Motor neuron (in vitro differentiated cells): ENCODE measurements at regions of chr19 and their contacts with region 1.

Region 1: GRCh38 chr19:46076951-46077816 is 36.4 kb upstream of the IGFL4 start:
- ATAC-seq: peak; percentile 79 to 100 (median 100)
- H3K4me3 ChIP-seq: peak overlapping the region; percentile 41 to 58 (median 49)
- H3K27ac ChIP-seq: no peak overlapping the region
- H3K4me1 ChIP-seq: peaks cover 0 to 2% of the 10 kb centered on the region in 2 donors

Region 2: DNA sequence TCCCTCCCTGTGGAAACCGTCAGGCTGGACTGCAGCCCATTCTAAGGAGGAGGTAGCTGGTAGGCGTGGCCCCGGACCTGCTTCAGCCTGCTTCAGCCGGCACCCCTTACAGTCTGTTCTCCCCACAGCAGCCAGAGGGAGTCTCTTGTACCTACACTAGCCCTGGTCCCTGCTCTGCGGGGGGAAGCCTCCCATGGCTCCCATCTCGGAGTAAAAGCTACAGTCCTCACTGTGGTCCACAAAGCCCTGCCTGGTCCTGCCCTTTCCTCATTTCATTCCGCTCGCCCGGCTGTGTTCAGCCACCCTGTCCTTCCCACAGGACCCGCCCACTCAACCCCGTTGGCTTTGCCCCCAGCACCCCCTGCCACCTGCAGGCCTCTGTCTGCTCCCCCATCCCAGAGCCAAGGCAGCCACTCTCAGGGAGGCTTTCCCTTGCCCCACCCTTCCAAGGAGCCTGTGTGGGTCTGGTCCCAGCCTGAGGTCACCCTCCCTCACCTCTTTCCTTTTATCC is 55.6 kb before region 1 on chr19:
- in situ Hi-C with region 1: loop called in 2 of 9 experiments (anchors 10 kb)
- ATAC-seq: peak in 5 of 8 experiments; percentile 16 to 62 (median 40)
- H3K4me3 ChIP-seq: no peak overlapping the region
- H3K27ac ChIP-seq: peak overlapping the region in 1 of 2 donors; percentile 2
- H3K4me1 ChIP-seq: peaks cover 9 to 12% of the 10 kb centered on the region in 2 donors

Region 3: DNA sequence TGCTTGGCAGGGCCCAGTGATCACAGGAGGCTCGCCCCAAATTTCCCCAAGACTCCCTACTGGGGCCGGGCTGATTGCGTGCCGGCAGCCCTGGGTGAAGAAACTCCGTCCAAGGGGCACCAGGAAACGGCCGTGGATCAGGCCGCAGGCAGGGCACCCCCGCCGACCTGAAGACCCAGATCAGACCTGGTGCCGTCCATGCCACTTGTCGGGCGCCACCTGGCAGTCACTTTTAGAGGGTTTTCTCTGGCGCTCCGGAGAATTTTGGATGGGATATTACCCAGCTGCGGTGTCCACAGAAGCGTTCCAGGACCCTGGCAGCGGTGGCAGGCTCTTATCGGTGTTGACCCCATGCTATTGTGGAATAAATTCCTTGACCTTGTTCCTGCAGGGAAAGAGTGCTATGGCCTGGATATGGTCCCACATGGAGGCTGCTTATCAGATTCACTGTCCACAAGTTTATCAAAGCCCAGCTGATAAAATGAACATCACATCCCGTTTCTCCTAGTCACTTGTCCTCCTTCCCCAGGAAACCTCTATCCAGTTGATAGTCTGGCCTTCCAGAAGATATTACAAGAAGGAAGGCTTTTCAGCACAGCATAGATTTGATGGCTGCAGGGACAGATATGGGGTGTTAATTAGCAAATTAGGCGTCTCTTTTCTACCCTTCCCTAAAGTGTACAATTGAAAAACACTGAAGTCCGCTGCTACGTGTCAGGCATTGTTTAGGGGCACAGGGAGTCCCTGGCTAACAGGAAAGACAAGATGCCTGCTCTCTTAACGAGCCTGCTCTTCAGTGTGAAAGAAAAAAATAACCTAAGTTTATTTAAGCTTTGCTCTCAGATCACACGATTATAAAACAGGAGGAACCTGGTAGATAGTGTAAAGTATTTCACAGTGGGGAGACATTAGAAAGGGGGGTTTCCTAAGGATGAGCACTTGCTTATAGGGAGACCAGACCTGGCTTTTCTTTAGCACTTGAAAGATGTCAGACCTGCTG is 109.2 kb after region 1 on chr19:
- in situ Hi-C with region 1: loop called in 4 of 9 experiments (anchors 5 to 25 kb)
- ATAC-seq: no peak
- H3K4me3 ChIP-seq: no peak overlapping the region
- H3K27ac ChIP-seq: no peak overlapping the region
- H3K4me1 ChIP-seq: peaks cover 0 to 3% of the 10 kb centered on the region in 2 donors

Region 4: DNA sequence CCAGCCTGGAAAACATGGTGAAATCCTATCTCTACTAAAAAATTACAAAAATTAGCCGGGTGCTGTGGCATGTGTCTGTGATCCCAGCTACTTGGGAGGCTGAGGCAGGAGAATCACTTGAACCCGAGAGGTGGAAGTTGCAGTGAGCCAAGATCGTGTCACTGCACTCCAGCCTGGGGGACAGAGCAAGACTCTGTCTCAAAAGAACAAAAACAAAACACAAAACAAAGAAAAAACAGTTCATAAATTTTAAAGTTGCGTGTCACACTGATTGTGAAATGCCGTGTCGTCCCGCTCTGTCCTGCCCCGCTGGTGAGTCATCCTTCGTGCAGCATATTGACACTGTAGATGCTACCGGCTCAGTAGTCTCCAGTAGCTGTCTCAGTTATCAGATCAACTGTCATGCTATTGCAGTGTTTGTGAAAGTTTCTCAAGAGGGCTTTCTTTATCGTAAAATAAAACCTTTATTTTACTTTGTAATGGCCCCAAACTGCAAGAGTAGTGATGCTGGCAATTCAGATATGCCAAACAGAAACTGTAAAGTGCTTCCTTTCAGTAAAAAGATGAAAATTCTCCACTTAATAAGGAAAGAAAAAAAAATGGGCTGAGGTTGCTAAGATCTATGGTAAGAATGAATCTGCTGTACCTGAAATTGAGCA is 115.9 kb after region 1 on chr19:
- in situ Hi-C with region 1: loop called in 4 of 9 experiments (anchors 5 to 25 kb)
- ATAC-seq: peak; percentile 60 to 99 (median 97)
- H3K4me3 ChIP-seq: no peak overlapping the region
- H3K27ac ChIP-seq: no peak overlapping the region
- H3K4me1 ChIP-seq: peaks cover 0 to 8% of the 10 kb centered on the region in 2 donors

Region 5: GRCh38 chr19:46265217-46265828 is 188.1 kb after region 1 on chr19:
- in situ Hi-C with region 1: loop called in 7 of 9 experiments (anchors 5 to 25 kb)
- ATAC-seq: peak; percentile 92 to 98 (median 96)
- H3K4me3 ChIP-seq: no peak overlapping the region
- H3K27ac ChIP-seq: no peak overlapping the region
- H3K4me1 ChIP-seq: no peaks in the 10 kb centered on the region

Region 6: DNA sequence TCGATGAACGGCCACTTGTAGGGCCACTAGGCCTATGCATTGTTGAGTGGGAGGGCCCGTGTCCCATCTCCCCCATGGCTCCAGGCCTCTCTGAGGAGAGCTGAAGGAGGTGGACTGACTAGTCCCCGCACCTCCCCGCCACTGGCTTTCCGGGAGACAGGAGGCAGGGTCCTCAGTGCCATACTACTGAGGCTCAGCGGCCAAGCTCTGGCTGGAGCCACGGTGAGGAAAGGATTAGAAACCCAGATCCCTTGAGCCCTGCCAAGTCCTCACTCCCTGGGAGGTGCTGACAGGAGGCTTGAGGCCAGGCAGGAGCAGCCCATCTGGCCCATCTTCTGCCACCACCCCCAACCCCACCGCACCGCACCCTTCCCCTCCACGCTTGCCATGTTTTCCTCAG is 307.2 kb after region 1 on chr19:
- in situ Hi-C with region 1: no loop called
- ATAC-seq: peak in 1 of 8 experiments; percentile 17
- H3K4me3 ChIP-seq: no peak overlapping the region
- H3K27ac ChIP-seq: no peak overlapping the region
- H3K4me1 ChIP-seq: no peaks in the 10 kb centered on the region